Right cardiac atrium (tissue), 5 donors: ENCODE measurements at regions of chr14 and their contacts with region 1.

Region 1: GRCh38 chr14:54691525-54692283 is 124.8 kb downstream of the SAMD4A start:
- DNase-seq: peak; percentile 79 to 90 (median 83)
- ATAC-seq: peak; percentile 81 to 84
- H3K4me3 ChIP-seq: no peak overlapping the region
- H3K27ac ChIP-seq: peak overlapping the region; percentile 85
- H3K4me1 ChIP-seq: peaks cover 8% of the 10 kb centered on the region
- H3K27me3 ChIP-seq: no peaks in the 10 kb centered on the region

Region 2: GRCh38 chr14:54606631-54607133 is 85.0 kb before region 1 on chr14:
- intact Hi-C with region 1: no loop called
- DNase-seq: peak in 2 of 3 donors; percentile 45 to 65
- ATAC-seq: peak; percentile 72 to 81
- H3K4me3 ChIP-seq: no peak overlapping the region
- H3K27ac ChIP-seq: peak overlapping the region; percentile 72
- H3K4me1 ChIP-seq: peaks cover 6% of the 10 kb centered on the region
- H3K27me3 ChIP-seq: no peaks in the 10 kb centered on the region

Region 3: GRCh38 chr14:54762296-54762695 is 70.6 kb after region 1 on chr14:
- intact Hi-C with region 1: loop called in 1 of 4 experiments (anchors 10 kb)
- DNase-seq: peak in 1 of 3 donors; percentile 52
- ATAC-seq: peak in 1 of 2 donors; percentile 66
- H3K4me3 ChIP-seq: no peak overlapping the region
- H3K27ac ChIP-seq: no peak overlapping the region
- H3K4me1 ChIP-seq: peaks cover 2% of the 10 kb centered on the region
- H3K27me3 ChIP-seq: no peaks in the 10 kb centered on the region

Region 4: DNA sequence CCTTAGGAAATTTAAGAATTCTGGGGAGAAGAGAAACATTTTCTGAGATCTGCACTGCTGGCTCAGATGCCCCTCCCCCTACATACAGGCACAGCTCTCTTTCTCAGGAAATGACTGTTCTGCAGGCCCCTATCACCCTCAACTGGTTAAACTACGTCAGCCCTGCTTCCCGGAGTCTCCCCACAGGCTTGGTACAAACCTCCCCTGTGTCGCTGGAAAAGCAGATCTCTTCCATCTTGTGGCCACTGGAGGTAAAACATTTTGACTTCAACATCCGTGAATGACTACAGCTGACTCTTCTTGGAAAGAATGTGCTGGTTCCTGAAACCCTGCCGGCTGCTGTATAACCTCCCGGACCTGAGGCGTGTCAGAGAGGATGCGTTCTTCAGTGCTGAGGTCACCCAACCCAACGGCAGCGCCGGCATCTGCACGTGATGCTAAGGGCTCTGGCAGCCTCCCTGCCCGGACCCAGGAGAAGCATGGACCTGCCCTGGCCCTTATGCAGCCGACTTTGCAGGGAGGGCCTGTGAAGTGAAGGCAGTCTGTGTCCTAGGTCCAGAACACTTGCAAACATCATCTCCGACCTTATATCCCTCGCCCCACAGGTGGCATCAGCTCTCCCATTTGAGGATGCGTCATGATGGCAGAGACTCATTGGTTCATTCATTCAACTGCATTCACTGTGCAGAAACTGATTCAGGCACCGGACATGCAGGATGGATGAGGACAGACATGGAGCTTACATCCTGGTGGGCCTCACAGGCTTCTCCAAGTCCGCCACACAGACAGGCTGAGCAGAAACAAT is 81.7 kb after region 1 on chr14:
- intact Hi-C with region 1: loop called (anchors 5 to 10 kb)
- DNase-seq: peak; percentile 87 to 90 (median 89)
- ATAC-seq: peak; percentile 88 to 95
- H3K4me3 ChIP-seq: no peak overlapping the region
- H3K27ac ChIP-seq: peak overlapping the region; percentile 93
- H3K4me1 ChIP-seq: peaks cover 8% of the 10 kb centered on the region
- H3K27me3 ChIP-seq: no peaks in the 10 kb centered on the region

Region 5: GRCh38 chr14:54867011-54867410 is 175.3 kb after region 1 on chr14:
- intact Hi-C with region 1: no loop called
- DNase-seq: no peak
- ATAC-seq: no peak
- H3K4me3 ChIP-seq: no peak overlapping the region
- H3K27ac ChIP-seq: no peak overlapping the region
- H3K4me1 ChIP-seq: no peaks in the 10 kb centered on the region
- H3K27me3 ChIP-seq: no peaks in the 10 kb centered on the region